Panc1 (cell line): ENCODE measurements at regions of chr4 and their contacts with region 1.

Region 1: GRCh38 chr4:80215449-80216052 is 18.2 kb downstream of the PRDM8 start:
- DNase-seq: no peak
- ATAC-seq: no peak
- H3K4me3 ChIP-seq: no peak overlapping the region
- H3K27ac ChIP-seq: no peak overlapping the region
- H3K4me1 ChIP-seq: no peaks in the 10 kb centered on the region
- H3K27me3 ChIP-seq: no peaks in the 10 kb centered on the region
- CTCF ChIP-seq: peak; percentile 58; the same call in 1 of the 2 replicates

Region 2: GRCh38 chr4:79917246-79917645 is 298.3 kb before region 1 on chr4:
- CTCF ChIA-PET with region 1: no interaction called
- POLR2A ChIA-PET with region 1: no interaction called
- in situ Hi-C with region 1: no loop called
- intact Hi-C with region 1: loop called (anchors 10 kb)
- DNase-seq: peak; percentile 22
- ATAC-seq: no peak
- H3K4me3 ChIP-seq: no peak overlapping the region
- H3K27ac ChIP-seq: no peak overlapping the region
- H3K4me1 ChIP-seq: no peaks in the 10 kb centered on the region
- H3K27me3 ChIP-seq: no peaks in the 10 kb centered on the region
- CTCF ChIP-seq: peak; percentile 75